ENCODE measurements at regions of chr11 and their contacts with region 1.

Region 1: DNA sequence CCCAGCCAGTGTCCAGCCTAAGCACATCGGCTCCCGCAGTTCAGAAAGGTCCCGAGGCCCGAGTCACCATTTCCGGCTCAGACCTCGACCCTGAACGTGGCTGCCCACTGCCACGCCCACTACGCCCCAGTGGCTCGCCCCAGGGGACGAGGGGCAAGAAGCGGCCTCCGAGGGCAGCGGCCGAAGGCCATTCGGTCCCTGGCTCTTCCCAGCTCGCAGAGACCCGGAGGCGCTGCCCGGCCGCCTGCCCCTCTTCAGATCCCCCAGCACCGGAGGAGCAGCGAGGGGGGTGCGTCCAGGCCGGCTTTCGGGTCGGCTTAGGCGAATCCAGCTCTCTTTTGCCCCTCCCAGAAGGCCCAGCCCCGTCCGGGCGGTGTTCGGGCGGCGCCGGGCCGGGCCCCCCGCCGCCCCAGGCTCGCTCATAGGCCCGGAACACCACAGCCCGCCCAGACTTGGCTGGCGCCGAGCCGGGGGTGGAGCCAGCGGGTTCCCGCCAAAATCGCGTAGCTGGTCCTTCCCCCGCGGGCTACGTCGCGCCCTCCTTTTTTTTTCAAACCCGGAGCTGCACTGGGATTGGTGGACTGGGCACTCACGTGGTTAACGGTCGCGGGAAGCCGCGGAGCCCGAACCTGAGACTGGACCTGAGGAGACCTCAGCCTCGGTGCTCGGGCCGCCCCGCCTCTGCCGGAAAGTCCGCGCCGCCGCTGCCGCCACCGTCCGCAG is at the start of gene WEE1:
- DNase-seq: peak; percentile 99
- ATAC-seq: peak; percentile 97
- total RNA-seq, gene WEE1: 13.8 TPM

Region 2: DNA sequence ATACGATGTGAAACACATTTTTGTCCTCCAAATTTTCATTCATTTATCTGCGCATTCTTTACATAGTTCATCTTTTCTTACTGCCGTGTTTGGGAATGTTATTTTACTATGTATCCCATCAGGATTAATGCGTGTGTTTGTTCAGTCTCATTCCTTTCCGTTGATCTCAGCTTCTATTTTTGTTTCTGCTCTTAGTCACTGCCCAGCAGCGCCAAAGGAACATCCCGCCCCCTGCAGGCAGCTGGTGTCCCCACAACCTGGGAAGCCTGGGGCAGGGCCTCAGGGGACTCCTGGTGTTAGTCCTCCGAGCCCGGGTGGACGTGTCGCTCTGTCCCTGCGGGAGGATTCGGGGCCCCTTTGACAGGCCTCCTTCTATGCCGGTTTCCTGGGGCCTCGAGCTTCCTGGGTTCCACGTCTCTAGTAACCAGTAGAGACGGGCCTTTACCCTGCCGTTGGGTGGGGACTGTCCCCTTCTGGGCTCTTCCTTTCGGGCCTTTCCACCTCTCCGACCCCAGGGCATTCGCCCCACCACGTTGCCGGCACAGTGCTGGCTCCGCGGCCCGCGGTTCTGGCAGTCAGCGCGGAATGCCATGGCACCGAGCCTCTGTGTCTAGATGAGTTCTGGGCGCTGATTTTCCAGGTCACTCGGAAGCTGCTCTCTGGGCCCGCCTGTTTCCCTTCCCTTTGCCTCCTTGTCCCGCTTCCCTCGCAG is 40.1 kb after region 1 on chr11:
- intact Hi-C with region 1: loop called (anchors 5 kb)
- DNase-seq: peak; percentile 96
- ATAC-seq: peak; percentile 95

Region 3: DNA sequence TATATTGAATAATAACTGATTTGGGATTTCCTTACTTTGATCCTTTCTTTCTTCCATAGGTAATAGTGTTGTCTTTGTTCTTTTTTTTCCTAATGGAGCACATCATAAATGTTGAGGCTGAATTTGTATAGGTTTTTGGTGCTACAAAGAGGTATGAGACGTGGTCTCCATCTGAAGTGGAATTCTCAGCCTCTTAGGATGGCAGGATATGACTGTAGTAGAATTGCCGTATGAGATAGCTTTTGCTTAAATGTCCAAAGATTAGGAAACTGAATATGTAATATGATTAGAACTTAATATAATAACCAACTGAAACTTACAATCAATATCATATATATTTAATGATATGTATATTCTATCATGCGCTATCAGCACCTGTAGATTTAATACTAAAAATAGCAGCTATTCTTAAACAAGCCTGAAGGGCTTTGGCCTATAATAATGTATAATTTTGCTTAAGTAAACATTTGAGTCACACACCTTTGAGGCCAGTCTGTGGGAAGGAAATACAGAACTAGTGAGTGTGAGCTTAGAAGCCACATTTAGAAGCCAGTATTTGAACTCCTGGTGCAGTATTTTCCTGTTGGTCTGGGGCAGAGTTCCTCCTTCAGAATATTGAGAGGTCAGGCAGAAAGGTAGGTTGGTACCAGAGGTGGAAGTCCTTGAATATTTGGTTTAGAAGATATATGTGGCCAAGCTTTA is 153.3 kb after region 1 on chr11:
- intact Hi-C with region 1: no loop called
- DNase-seq: no peak
- ATAC-seq: no peak

Region 4: DNA sequence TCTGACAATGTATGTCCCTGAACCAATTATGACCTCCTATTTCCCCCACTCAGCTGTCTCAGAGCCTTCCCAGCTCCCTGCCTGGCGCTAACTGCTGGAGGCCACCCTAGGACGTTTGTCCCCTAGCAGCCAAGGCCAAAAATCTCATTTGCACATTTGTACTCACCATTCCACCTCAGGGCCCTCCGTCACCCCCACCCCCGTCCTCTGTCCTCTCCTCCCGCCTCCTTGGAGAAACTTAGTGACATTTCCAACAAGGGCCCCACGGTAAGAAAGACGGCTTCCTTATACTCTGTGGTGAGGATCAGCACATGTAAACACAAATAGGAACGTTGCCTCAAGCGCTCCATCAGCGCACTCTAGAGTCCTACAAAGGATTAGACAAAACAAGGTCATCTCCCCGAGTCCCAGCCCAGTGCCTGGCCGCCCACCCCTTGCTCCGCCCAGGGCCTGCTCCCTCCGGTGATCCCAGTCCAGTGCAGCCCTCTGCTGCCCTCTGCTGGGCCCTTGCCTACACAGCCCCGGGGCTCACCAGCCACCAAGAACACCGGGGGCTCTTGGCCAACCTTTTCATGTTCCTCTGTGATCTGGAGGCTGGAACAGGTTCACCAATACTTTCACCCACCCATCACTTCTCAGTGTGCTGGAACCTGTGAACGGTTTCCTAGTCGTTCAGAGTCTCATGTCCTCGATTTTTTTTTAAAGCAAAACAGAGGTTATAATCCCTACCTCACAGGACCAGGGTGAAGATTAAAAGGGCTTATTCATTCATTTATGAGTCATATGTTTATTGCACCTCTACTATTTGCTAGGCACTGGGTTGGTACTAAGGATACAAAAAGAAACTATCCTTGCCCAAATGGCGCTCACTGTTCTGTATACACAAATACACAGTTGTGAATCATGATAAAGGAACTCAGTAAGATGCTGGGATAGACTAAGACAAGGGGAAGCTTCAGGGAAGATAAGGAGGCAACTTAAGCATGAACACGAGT is 1162.6 kb after region 1 on chr11:
- intact Hi-C with region 1: no loop called
- DNase-seq: peak; percentile 97
- ATAC-seq: peak; percentile 99

Measured in sciatic nerve (tissue), 2 donors.